Dorsolateral prefrontal cortex (tissue), 120 donors: ENCODE measurements at regions of chr15 and their contacts with region 1.

Region 1: GRCh38 chr15:38563723-38564519 is 693 bp downstream of the RASGRP1 start:
- DNase-seq: peak; percentile 52 to 87 (median 72)
- H3K4me3 ChIP-seq: peak overlapping the region; percentile 48 to 81 (median 68)
- H3K27ac ChIP-seq: peak overlapping the region in 23 of 59 donors; percentile 11 to 80 (median 46)
- H3K27me3 ChIP-seq: no peaks in the 10 kb centered on the region
- CTCF ChIP-seq: peak; percentile 64 to 94 (median 87)

Region 2: DNA sequence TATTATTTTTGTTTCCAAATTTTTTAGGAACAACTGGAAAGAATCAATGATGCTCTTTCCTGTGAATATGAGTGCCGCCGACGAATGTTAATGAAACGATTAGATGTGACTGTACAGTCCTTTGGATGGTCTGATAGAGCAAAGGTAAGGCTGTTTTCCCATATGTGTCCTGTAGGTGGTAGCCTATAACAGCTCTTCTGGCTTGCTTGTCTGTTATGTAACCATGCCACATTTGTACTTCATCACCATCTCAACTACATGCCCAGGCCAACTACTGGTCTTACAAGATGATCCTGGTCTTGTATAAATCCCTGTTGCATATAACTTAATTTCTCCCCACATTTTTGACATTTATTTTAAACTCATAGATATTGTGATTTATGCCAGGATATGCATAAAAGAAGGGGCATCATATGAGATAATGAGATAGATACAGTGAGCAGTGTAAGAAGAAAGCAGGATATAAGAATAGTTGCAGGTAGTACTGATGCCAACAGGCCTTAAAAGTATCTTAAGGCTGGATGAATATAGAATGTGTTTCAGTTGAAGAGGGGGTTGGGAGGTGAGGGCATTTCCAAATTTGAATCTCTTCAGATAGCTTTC is 89.7 kb before region 1 on chr15:
- intact Hi-C with region 1: loop called (anchors 10 kb)
- DNase-seq: peak in 2 of 10 donors; percentile 42 to 58
- H3K4me3 ChIP-seq: no peak overlapping the region
- H3K27ac ChIP-seq: peak overlapping the region in 43 of 59 donors; percentile 11 to 73 (median 52)
- H3K27me3 ChIP-seq: no peaks in the 10 kb centered on the region
- CTCF ChIP-seq: peak; percentile 56 to 94 (median 85)

Region 3: GRCh38 chr15:38587214-38587613 is 23.3 kb after region 1 on chr15:
- intact Hi-C with region 1: loop called in 1 of 2 experiments (anchors 2 kb)
- DNase-seq: no peak
- H3K4me3 ChIP-seq: no peak overlapping the region
- H3K27ac ChIP-seq: no peak overlapping the region
- H3K27me3 ChIP-seq: no peaks in the 10 kb centered on the region
- CTCF ChIP-seq: no peak

Region 4: GRCh38 chr15:38624244-38625205 is 60.6 kb after region 1 on chr15:
- intact Hi-C with region 1: loop called in 1 of 2 experiments (anchors 5 kb)
- DNase-seq: no peak
- H3K4me3 ChIP-seq: no peak overlapping the region
- H3K27ac ChIP-seq: no peak overlapping the region
- H3K27me3 ChIP-seq: no peaks in the 10 kb centered on the region
- CTCF ChIP-seq: no peak

Region 5: GRCh38 chr15:38631126-38632075 is 67.5 kb after region 1 on chr15:
- intact Hi-C with region 1: loop called (anchors 5 to 10 kb)
- DNase-seq: no peak
- H3K4me3 ChIP-seq: no peak overlapping the region
- H3K27ac ChIP-seq: no peak overlapping the region
- H3K27me3 ChIP-seq: no peaks in the 10 kb centered on the region
- CTCF ChIP-seq: no peak

Region 6: DNA sequence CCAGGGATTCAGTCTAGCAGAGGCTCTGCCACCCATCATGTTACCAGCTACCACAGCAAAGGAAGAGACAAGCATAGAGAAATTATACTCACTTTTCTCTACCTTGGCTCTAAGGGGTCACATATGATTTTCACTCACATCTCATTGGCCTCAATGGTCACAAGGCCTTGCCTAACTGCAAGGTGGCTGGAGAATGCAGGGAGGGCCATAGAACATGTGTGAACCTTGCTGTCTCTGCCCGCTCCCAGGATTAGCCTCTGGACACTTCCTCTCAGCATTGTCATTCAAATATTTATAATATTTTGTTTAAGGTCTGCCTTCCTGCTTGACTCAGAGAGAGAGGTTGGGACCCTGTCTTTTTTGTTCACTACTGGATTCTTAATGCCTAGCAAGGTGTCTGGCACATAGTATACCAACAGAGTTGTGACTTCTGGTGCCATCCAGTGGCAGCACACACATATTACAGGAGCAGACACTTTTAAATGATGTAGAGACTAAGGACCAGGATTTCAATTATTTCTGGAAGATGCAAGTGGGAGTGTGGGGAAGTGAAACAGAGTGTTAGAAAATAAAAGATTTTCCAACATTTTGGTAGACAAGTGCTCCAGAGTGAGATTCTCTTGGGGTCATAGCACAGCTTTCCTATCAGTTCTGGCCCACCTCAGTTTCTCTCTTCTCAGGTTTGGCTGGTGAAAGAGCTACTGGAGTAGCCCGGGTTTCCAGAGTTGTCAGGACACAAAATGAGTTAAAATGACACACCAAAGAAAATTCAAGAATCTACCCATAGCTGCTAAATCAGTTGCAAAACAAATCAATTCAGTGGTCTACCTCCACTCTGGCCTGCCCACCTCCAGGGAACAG is 119.7 kb after region 1 on chr15:
- intact Hi-C with region 1: loop called (anchors 2 to 5 kb)
- DNase-seq: peak; percentile 23 to 76 (median 60)
- H3K4me3 ChIP-seq: no peak overlapping the region
- H3K27ac ChIP-seq: no peak overlapping the region
- H3K27me3 ChIP-seq: no peaks in the 10 kb centered on the region
- CTCF ChIP-seq: peak; percentile 49 to 91 (median 80)